Activated CD4-positive, alpha-beta memory T cell treated with anti-CD3 and anti-CD28 coated beads, Interleukin-2, amount 10 ng/mL, durations not matched to agents 7 days and 5 days (primary cell): ENCODE measurements at regions of chr1 and their contacts with region 1.

Region 1: DNA sequence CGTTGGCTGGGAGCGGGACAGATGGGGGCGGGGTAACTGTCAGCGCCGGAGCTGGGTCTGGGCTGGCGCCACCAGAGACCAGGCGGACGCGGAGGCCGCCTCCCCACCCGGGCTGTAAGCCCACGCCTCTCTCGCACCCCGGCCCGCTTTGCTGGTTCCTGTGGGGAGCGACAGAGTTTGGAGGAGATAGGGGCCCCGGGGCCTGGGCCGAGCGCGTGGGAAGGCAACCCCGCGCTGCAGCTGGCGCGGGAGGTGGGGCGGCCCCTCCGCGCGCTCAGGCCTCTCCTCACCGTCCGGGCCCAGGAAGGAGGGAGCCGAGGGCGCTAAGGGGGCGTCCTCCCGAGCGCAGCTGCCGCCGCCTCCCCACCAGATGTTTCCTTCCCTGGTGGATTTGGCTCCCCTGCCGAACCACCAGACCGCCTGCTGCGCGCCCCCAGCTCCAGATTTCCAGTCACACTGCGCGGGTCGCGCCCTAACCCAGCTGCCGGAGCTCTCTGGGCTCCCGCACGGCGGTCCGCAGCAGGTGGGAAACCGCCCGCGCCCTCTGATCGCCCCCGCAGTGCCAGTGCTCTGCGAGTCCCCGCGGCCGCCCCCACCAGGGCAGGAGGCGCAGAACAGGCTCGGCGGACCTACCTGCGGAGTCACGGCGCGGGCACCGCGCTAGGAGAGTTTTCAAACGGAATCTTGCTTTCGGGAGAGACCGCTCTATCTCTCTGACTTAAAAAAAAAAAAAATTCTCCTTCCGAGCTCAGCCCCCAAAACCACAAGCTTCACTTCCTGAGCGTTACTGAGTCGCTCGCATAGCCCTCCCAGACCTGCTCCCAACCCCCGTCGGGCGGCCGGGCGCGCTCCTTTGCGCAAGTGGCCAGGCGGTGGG is 1.1 kb downstream of the GFI1 start:
- DNase-seq: peak; percentile 90
- H3K4me3 Mint-ChIP-seq: peak overlapping the region; percentile 85
- H3K27ac Mint-ChIP-seq: peak overlapping the region; percentile 92
- H3K4me1 Mint-ChIP-seq: peaks cover 45% of the 10 kb centered on the region
- H3K27me3 Mint-ChIP-seq: no peaks in the 10 kb centered on the region

Region 2: DNA sequence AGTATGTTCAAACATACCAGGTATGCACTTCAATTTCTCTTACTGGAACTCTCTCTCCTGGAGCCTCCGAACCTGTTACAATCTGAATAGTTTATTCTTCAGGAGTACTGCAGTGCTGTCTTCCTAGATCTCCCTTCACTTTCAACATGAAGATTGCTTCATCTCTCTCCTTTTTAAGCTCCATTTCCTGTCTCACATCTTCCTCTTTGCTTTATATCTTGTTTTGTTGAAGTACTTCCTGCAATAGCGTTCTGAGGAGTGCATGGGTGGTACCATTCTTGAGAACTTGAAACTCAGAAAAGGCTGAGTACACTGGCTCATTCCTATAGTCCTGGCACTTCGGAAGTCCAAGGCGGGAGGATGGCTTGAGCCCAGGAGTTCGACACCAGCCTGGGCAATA is 283.6 kb before region 1 on chr1:
- CTCF ChIA-PET with region 1: no interaction called
- POLR2A ChIA-PET with region 1: no interaction called
- DNase-seq: no peak
- H3K4me3 Mint-ChIP-seq: no peak overlapping the region
- H3K27ac Mint-ChIP-seq: peak overlapping the region; percentile 50
- H3K4me1 Mint-ChIP-seq: peaks cover 20% of the 10 kb centered on the region
- H3K27me3 Mint-ChIP-seq: no peaks in the 10 kb centered on the region

Region 3: DNA sequence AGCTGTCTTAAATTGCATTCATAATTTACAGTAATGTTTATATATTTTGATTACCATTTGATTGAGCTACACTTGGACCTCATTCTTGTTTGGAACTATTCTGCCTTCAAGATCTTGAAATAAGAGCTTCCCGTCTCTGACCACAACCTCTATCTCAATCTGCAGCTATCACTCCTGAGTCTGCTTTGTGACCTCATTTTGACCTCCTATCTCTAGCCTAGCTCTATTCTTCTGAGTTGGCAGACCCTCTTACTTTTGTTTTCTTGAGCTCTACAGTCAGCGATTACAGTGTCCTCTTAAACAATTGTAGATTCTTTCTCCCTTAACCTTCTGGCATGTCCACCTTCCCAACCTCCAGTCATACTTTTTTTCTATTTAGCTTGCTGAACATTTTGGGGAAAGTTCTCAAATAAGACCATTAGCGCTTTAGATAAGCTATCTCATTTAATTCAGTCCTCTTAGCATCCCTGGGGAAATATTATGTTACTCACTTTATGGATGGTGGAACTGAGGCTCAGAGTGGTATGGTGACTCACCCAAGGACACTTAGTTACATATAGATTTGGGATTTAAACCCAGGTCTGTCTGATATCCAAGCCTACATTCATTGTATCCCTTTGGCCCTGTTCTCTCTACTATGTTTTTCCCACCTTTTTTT is 167.7 kb before region 1 on chr1:
- CTCF ChIA-PET with region 1: interaction called, 89 read pairs
- POLR2A ChIA-PET with region 1: interaction called, 306 read pairs
- DNase-seq: peak; percentile 36
- H3K4me3 Mint-ChIP-seq: peak overlapping the region; percentile 25
- H3K27ac Mint-ChIP-seq: peak overlapping the region; percentile 85
- H3K4me1 Mint-ChIP-seq: peaks cover 67% of the 10 kb centered on the region
- H3K27me3 Mint-ChIP-seq: no peaks in the 10 kb centered on the region

Region 4: GRCh38 chr1:92419642-92420041 is 66.0 kb before region 1 on chr1:
- CTCF ChIA-PET with region 1: no interaction called
- POLR2A ChIA-PET with region 1: no interaction called
- DNase-seq: no peak
- H3K4me3 Mint-ChIP-seq: no peak overlapping the region
- H3K27ac Mint-ChIP-seq: no peak overlapping the region
- H3K4me1 Mint-ChIP-seq: no peaks in the 10 kb centered on the region
- H3K27me3 Mint-ChIP-seq: no peaks in the 10 kb centered on the region

Region 5: GRCh38 chr1:92430030-92430429 is 55.6 kb before region 1 on chr1:
- CTCF ChIA-PET with region 1: no interaction called
- POLR2A ChIA-PET with region 1: no interaction called
- DNase-seq: no peak
- H3K4me3 Mint-ChIP-seq: no peak overlapping the region
- H3K27ac Mint-ChIP-seq: no peak overlapping the region
- H3K4me1 Mint-ChIP-seq: no peaks in the 10 kb centered on the region
- H3K27me3 Mint-ChIP-seq: peaks cover 7% of the 10 kb centered on the region

Region 6: GRCh38 chr1:92461364-92462097 is 24.1 kb before region 1 on chr1:
- CTCF ChIA-PET with region 1: interaction called, 5 read pairs
- POLR2A ChIA-PET with region 1: interaction called, 55 read pairs
- DNase-seq: no peak
- H3K4me3 Mint-ChIP-seq: no peak overlapping the region
- H3K27ac Mint-ChIP-seq: no peak overlapping the region
- H3K4me1 Mint-ChIP-seq: peaks cover 67% of the 10 kb centered on the region
- H3K27me3 Mint-ChIP-seq: no peaks in the 10 kb centered on the region

Region 7: GRCh38 chr1:92544756-92545165 is 59.1 kb after region 1 on chr1:
- CTCF ChIA-PET with region 1: interaction called, 72 read pairs
- POLR2A ChIA-PET with region 1: interaction called, 372 read pairs
- DNase-seq: no peak
- H3K4me3 Mint-ChIP-seq: no peak overlapping the region
- H3K27ac Mint-ChIP-seq: no peak overlapping the region
- H3K4me1 Mint-ChIP-seq: peaks cover 50% of the 10 kb centered on the region
- H3K27me3 Mint-ChIP-seq: no peaks in the 10 kb centered on the region

Region 8: GRCh38 chr1:92577261-92577895 is 91.8 kb after region 1 on chr1:
- CTCF ChIA-PET with region 1: interaction called, 9 read pairs
- POLR2A ChIA-PET with region 1: interaction called, 233 read pairs
- DNase-seq: no peak
- H3K4me3 Mint-ChIP-seq: peak overlapping the region; percentile 73
- H3K27ac Mint-ChIP-seq: peak overlapping the region; percentile 80
- H3K4me1 Mint-ChIP-seq: peaks cover 73% of the 10 kb centered on the region
- H3K27me3 Mint-ChIP-seq: no peaks in the 10 kb centered on the region